Gastrocnemius medialis (tissue), 4 donors: ENCODE measurements at regions of chr10 and their contacts with region 1.

Region 1: DNA sequence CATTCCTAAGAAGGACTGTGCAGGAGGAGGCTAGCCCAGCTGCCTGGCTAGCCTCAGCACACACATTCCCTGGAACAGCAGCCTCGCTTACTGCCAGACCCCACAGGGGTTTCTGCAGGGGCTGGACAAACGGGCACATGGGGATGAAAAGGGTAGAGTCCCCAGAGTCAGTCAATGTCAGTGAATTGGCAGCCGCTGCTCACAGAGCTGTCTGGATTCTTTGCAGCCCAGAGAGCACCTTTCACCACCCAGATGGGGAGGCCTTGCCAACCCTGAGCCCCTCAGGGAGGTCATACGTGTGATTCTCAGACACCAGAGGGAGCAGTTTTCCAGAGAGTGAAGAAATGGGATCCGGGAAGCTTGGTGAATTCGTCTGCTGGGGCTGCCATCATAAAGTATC is 143.3 kb downstream of the KCNMA1 start:
- DNase-seq: no peak
- ATAC-seq: no peak
- H3K4me3 ChIP-seq: no peak overlapping the region
- H3K27ac ChIP-seq: peak overlapping the region; percentile 79 to 94 (median 90)
- H3K4me1 ChIP-seq: peaks cover 76 to 81% of the 10 kb centered on the region in 2 donors
- H3K27me3 ChIP-seq: no peaks in the 10 kb centered on the region
- CTCF ChIP-seq: peak; percentile 28 to 46 (median 37)
- POLR2A ChIP-seq: no peak

Region 2: DNA sequence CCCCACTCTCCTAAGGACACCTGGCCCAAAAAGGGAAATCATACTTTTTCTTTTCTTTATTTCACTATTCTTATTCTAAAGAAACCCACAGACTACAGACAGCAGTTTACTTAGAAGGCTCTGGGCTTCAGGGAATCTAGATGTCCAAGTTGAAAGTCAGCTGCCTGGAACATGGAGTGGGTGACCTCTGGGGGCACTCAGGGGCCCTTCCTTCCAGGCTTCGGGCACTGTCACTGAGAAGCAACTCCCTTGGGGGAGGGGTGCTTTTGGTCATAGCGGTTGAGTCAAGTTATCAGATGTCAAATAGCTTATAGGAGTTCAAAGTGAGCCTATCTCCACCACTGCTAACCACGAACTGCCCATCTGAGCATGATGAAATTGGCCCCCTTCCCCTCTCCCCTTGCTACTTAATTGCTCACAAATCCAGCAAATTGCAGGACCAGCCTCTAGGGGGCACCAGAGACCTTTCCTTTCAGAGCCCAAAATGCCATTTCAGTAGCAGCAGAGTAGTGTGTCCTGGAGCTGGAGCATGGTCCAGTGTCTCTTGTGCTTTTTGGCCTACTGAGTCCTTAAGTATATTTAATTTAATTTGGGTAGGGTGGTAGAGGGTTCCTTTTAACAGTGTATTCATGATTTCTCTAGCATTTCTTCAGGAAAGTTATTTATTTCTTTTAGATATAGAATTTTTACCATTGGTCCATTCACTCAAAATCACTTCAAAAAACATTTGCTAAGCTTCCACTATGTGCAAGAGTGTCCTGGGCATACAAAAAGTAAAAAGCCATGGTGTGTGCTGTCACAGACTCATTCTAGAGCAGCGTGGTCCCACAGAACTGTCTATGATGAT is 320.5 kb before region 1 on chr10:
- in situ Hi-C with region 1: loop called in 1 of 4 experiments (anchors 25 kb)
- intact Hi-C with region 1: no loop called
- DNase-seq: peak; percentile 42 to 73
- ATAC-seq: peak; percentile 66 to 90
- H3K4me3 ChIP-seq: no peak overlapping the region
- H3K27ac ChIP-seq: no peak overlapping the region
- H3K4me1 ChIP-seq: peaks cover 6 to 8% of the 10 kb centered on the region in 2 donors
- H3K27me3 ChIP-seq: no peaks in the 10 kb centered on the region
- CTCF ChIP-seq: peak; percentile 88 to 94 (median 89)
- POLR2A ChIP-seq: no peak

Region 3: GRCh38 chr10:77531441-77532001 is 37.2 kb after region 1 on chr10:
- in situ Hi-C with region 1: no loop called
- intact Hi-C with region 1: loop called (anchors 2 kb)
- DNase-seq: peak; percentile 86 to 92
- ATAC-seq: peak; percentile 72 to 81
- H3K4me3 ChIP-seq: peak overlapping the region in 1 of 4 donors; percentile 7
- H3K27ac ChIP-seq: peak overlapping the region; percentile 60 to 92 (median 88)
- H3K4me1 ChIP-seq: peaks cover 54 to 78% of the 10 kb centered on the region in 2 donors
- H3K27me3 ChIP-seq: no peaks in the 10 kb centered on the region
- CTCF ChIP-seq: no peak
- POLR2A ChIP-seq: peak; percentile 31 to 37

Region 4: GRCh38 chr10:77555591-77556212 is 61.4 kb after region 1 on chr10:
- in situ Hi-C with region 1: no loop called
- intact Hi-C with region 1: loop called (anchors 2 kb)
- DNase-seq: peak; percentile 54 to 72
- ATAC-seq: peak; percentile 83 to 89
- H3K4me3 ChIP-seq: no peak overlapping the region
- H3K27ac ChIP-seq: peak overlapping the region; percentile 80 to 86 (median 84)
- H3K4me1 ChIP-seq: peaks cover 44 to 49% of the 10 kb centered on the region in 2 donors
- H3K27me3 ChIP-seq: no peaks in the 10 kb centered on the region
- CTCF ChIP-seq: no peak
- POLR2A ChIP-seq: peak; percentile 22 to 36

Region 5: GRCh38 chr10:77592946-77593636 is 98.8 kb after region 1 on chr10:
- in situ Hi-C with region 1: no loop called
- intact Hi-C with region 1: no loop called
- DNase-seq: peak; percentile 43 to 61
- ATAC-seq: peak; percentile 25 to 46
- H3K4me3 ChIP-seq: no peak overlapping the region
- H3K27ac ChIP-seq: peak overlapping the region; percentile 94 to 99 (median 96)
- H3K4me1 ChIP-seq: peaks cover 58 to 64% of the 10 kb centered on the region in 2 donors
- H3K27me3 ChIP-seq: no peaks in the 10 kb centered on the region
- CTCF ChIP-seq: no peak
- POLR2A ChIP-seq: no peak

Region 6: GRCh38 chr10:77641788-77642397 is 147.6 kb after region 1 on chr10:
- in situ Hi-C with region 1: no loop called
- intact Hi-C with region 1: loop called (anchors 2 kb)
- DNase-seq: peak in 1 of 2 donors; percentile 49
- ATAC-seq: peak; percentile 21 to 31
- H3K4me3 ChIP-seq: no peak overlapping the region
- H3K27ac ChIP-seq: peak overlapping the region in 1 of 4 donors; percentile 13
- H3K4me1 ChIP-seq: peaks cover 3 to 6% of the 10 kb centered on the region in 2 donors
- H3K27me3 ChIP-seq: peaks cover 0 to 3% (median 0%) of the 10 kb centered on the region in 3 donors
- CTCF ChIP-seq: peak; percentile 83 to 95 (median 90)
- POLR2A ChIP-seq: no peak